Gastrocnemius medialis (tissue), 4 donors: ENCODE measurements at regions of chr15 and their contacts with region 1.

Region 1: GRCh38 chr15:58611731-58612676 is 137.5 kb downstream of the ADAM10 start:
- DNase-seq: no peak
- ATAC-seq: no peak
- H3K4me3 ChIP-seq: no peak overlapping the region
- H3K27ac ChIP-seq: no peak overlapping the region
- H3K4me1 ChIP-seq: no peaks in the 10 kb centered on the region
- H3K27me3 ChIP-seq: no peaks in the 10 kb centered on the region
- CTCF ChIP-seq: no peak
- POLR2A ChIP-seq: no peak

Region 2: DNA sequence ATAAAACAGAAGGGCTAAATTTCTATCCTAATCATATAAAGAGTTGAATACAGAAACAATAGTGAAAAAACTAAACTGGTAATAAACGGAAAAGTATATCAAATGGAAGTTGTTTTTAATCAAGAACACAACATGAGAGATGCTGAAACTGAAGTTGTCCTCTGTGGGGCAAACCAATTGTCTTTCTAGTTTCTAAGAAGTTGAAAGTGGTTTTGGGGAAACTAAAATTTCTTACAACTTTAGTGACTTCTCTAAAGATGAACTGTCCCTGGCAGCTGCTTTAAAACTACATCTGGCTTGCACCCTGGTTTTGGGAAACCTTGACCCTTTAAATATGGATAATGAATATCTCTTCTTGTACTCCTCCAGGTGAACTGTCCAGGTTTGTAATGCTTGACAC is 18.1 kb before region 1 on chr15:
- in situ Hi-C with region 1: no loop called
- intact Hi-C with region 1: loop called (anchors 2 kb)
- DNase-seq: no peak
- ATAC-seq: no peak
- H3K4me3 ChIP-seq: no peak overlapping the region
- H3K27ac ChIP-seq: no peak overlapping the region
- H3K4me1 ChIP-seq: no peaks in the 10 kb centered on the region
- H3K27me3 ChIP-seq: no peaks in the 10 kb centered on the region
- CTCF ChIP-seq: no peak
- POLR2A ChIP-seq: no peak

Region 3: DNA sequence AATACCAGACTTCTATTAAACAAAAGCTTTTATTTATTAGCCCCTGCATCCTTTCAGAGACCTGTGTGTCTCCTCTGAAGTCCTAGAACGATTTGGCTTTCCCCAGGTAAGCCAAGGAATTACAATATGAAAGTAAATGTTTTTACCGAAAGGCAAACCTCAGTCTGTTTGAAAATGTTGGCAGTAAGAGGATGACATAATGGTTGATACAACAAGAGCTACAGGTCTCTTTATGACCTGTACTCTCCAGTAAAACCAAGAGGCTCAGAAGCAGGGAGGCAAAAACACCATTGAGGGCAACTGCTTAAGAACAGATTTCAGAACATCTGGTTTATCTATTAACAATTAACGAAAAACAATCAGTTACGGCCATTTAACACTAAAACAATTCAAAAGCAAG is 29.7 kb after region 1 on chr15:
- in situ Hi-C with region 1: no loop called
- intact Hi-C with region 1: loop called (anchors 1 kb)
- DNase-seq: no peak
- ATAC-seq: no peak
- H3K4me3 ChIP-seq: no peak overlapping the region
- H3K27ac ChIP-seq: no peak overlapping the region
- H3K4me1 ChIP-seq: no peaks in the 10 kb centered on the region
- H3K27me3 ChIP-seq: no peaks in the 10 kb centered on the region
- CTCF ChIP-seq: no peak
- POLR2A ChIP-seq: no peak

Region 4: DNA sequence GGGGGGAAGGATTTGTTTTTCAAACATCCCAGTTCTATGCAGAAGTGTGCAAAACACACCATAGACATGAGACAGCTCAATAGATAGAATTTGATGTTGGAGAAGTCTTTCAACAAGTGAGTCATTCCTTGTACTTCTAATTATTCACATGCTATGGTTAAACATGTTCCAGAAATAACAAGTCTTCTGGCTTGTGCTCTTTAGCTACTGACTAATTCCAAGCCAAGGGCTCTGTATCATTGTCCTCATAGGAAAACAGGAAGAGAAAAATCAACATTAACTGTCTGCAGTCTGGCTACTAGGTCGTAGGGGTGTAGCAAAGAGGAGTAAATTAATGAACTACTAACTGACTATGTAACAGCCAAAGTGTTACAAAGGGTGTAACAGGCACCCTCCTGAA is 620.5 kb after region 1 on chr15:
- in situ Hi-C with region 1: no loop called
- intact Hi-C with region 1: no loop called
- DNase-seq: no peak
- ATAC-seq: peak in 1 of 2 donors; percentile 60
- H3K4me3 ChIP-seq: no peak overlapping the region
- H3K27ac ChIP-seq: no peak overlapping the region
- H3K4me1 ChIP-seq: peaks cover 10 to 12% of the 10 kb centered on the region in 2 donors
- H3K27me3 ChIP-seq: no peaks in the 10 kb centered on the region
- CTCF ChIP-seq: no peak
- POLR2A ChIP-seq: no peak